Uterus (tissue), 4 donors: ENCODE measurements at regions of chr3 and their contacts with region 1.

Region 1: DNA sequence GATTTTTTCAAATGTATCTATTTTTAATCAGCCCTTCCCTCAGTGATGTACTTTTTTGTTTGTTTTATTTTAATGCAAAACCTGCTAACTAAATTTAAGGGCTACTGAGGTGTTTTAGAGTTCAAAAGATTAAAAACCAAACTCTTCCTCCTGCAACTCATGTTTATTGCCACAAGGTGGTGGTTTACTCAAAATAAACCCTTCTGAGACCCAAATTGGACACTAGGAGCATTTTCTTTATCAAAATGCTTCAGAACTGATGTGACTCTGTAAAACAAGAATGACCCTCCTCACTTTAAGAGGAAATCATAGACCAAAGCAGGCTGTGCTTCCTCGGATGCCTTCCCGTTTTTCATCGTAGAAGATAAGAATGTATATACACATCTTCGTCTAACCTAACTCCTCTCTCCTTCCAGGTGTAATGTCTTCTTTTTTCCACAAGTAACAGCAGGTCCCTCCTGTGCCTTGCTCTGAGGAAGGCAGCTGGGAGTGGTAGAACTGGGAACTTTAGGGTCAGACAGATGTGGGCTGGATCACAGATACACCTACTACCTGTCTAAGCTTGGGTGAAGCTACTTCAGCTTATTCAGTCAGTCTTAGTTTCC is 2.9 kb upstream of the NME9 start:
- DNase-seq: no peak
- H3K4me3 ChIP-seq: no peak overlapping the region
- H3K27ac ChIP-seq: no peak overlapping the region
- H3K4me1 ChIP-seq: peaks cover 3 to 10% of the 10 kb centered on the region in 2 donors
- H3K27me3 ChIP-seq: no peaks in the 10 kb centered on the region
- CTCF ChIP-seq: peak; percentile 63 to 81 (median 66)
- POLR2A ChIP-seq: no peak

Region 2: DNA sequence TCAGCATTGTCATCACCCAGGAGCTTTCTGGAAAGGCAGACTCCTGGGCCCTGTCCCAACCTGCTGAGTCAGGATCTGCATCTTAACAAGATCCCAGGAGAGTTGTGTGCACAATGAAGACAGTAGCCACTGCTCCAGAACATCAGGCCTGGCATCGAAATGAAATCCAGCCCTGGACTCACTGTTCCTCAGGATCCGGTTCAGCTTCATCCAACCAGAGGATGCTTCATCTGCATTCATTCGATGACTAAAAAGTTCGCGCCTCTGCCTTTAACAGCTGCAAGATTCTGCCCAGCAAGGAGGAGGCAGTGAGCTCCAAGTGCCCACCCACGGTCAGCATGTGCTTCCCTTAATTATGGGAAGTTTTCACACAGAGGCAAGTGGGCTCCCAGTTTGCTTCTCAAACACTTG is 76.2 kb after region 1 on chr3:
- intact Hi-C with region 1: loop called (anchors 10 kb)
- DNase-seq: no peak
- H3K4me3 ChIP-seq: no peak overlapping the region
- H3K27ac ChIP-seq: no peak overlapping the region
- H3K4me1 ChIP-seq: no peaks in the 10 kb centered on the region
- H3K27me3 ChIP-seq: no peaks in the 10 kb centered on the region
- CTCF ChIP-seq: no peak
- POLR2A ChIP-seq: no peak